ENCODE measurements at regions of chr2 and their contacts with region 1.

Region 1: DNA sequence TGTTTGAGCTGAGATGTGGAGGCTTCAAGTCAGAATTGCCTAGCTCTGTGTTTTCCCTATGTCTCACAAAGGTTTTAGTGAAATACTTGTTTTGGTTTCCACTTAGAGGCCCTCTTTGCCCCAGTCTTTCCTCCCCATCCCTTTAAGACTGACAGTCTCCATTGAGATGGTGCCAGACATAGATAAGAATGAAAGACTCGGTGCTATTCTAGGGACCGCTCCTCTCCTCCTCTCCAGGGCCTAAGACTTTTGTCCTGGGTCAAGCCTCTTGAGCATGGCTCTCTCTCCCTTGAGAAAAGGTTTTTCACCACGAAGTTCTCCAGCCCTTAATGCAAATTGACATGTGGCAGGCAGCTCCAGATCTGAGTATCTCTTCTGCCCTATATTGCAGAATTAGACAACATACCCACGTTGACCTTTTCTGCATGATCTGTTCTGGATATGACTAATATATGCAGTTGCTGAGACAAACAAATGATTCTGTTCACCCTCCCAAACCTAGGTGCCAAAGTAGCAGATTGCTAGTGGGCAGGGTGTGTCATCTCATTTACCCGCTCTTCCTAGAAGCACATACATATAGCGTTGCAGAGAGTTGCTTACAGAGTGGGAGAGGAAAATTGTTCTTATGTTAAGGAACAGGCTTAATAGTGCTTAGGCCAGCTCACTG is 47.5 kb upstream of the ACSL3 start:
- DNase-seq: peak; percentile 57
- H3K4me3 Mint-ChIP-seq: peak overlapping the region; percentile 20
- H3K27ac Mint-ChIP-seq: peak overlapping the region; percentile 90
- H3K4me1 Mint-ChIP-seq: peaks cover 19% of the 10 kb centered on the region
- H3K27me3 Mint-ChIP-seq: peaks cover 8% of the 10 kb centered on the region

Region 2: DNA sequence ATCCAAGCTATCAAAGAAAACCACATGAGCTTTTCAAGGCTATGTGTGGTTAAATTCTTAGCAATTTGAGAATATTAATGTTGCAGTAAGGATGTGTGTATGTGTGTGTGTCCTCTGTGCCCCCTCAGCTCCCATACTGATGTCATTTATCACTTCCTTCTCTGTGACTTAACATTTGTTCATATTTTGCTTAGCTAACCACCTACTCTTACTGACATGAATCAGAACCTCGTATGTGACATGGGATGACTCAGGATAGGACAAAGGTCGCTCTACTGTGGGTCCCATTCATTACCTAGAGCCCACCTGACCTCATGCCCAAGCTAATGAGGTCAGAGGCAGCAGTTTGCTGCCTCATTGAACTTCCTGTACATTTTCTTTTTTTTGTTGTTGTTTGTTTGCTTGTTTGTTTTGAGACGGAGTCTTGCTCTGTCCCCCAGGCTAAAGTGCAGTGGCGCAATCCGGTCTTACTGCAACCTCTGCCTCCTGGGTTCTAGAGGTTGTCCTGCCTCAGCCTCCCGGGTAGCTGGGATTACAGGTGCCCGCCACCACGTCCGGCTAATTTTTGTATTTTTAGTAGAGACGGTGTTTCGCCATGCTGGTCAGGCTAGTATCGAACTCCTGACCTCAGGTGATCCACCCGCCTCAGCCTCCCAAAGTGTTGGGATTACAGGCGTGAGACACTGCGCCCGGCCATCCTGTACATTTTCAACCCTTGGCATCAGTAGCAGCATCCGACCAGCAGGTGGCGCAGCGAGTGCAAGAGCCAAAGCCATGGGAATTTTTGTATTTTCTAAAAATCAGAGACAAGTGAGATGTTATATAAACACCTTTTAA is 105.4 kb before region 1 on chr2:
- CTCF ChIA-PET with region 1: interaction called, 5 read pairs
- POLR2A ChIA-PET with region 1: no interaction called
- intact Hi-C with region 1: loop called (anchors 1 kb)
- DNase-seq: peak; percentile 84
- H3K4me3 Mint-ChIP-seq: no peak overlapping the region
- H3K27ac Mint-ChIP-seq: no peak overlapping the region
- H3K4me1 Mint-ChIP-seq: peaks cover 6% of the 10 kb centered on the region
- H3K27me3 Mint-ChIP-seq: peaks cover 29% of the 10 kb centered on the region

Region 3: GRCh38 chr2:222797261-222797660 is 16.0 kb before region 1 on chr2:
- CTCF ChIA-PET with region 1: no interaction called
- POLR2A ChIA-PET with region 1: interaction called, 4 read pairs
- intact Hi-C with region 1: loop called (anchors 1 kb)
- DNase-seq: no peak
- H3K4me3 Mint-ChIP-seq: no peak overlapping the region
- H3K27ac Mint-ChIP-seq: no peak overlapping the region
- H3K4me1 Mint-ChIP-seq: peaks cover 2% of the 10 kb centered on the region
- H3K27me3 Mint-ChIP-seq: peaks cover 6% of the 10 kb centered on the region

Region 4: GRCh38 chr2:222860740-222861410 is 47.6 kb after region 1 on chr2 and contains the start of gene ACSL3:
- CTCF ChIA-PET with region 1: no interaction called
- POLR2A ChIA-PET with region 1: interaction called, 5 read pairs
- intact Hi-C with region 1: loop called (anchors 1 kb)
- DNase-seq: peak; percentile 95
- H3K4me3 Mint-ChIP-seq: peak within 1 kb of the TSS; percentile 71
- H3K27ac Mint-ChIP-seq: peak within 1 kb of the TSS; percentile 84
- H3K4me1 Mint-ChIP-seq: peaks cover 3% of the 10 kb centered on the region
- H3K27me3 Mint-ChIP-seq: peaks cover 5% of the 10 kb centered on the region
- total RNA-seq, gene ACSL3: 48.7 to 57.2 TPM

Region 5: DNA sequence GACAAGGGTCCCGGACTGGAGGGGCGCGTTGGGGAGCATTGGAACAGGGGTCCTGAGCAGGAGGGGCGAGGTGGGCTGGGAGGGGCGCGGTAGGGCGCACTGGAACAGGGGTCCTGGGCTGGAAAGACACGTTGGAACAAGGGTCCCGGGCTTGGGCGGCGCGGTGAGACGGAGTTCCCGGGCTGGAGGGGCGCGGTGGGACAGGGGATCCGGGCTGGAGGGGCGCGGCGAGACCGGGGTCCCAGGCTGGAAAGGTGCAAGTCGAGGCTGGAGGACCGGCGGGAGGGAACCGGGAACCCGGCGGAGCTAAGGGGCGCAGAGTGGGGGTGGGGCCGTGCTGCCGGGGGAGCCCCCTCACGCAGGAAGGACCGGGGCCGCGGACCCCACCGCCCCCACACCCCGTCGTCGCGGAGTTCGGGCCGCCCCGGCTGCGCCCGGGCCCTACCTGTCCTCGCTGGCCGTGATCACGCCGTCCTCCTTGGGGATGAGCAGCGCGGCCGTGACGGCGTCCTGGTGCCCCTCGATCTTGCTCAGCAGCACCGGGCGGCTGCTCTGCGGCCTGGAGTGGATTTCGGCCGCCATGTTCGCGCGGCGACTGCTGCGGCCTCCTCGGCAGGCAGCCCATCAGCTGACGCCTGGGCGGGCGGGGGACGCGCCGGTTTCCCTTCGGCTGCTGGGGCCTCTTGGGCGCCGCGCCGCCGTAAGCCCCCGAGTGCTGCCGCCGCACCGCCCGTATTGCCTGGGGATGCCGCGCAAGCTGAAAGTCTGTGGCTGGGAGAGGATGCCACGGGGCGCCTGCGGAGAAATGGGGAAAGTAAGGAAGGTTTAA is 1131.6 kb after region 1 on chr2 and contains the start of gene WDFY1:
- CTCF ChIA-PET with region 1: no interaction called
- POLR2A ChIA-PET with region 1: no interaction called
- intact Hi-C with region 1: loop called (anchors 5 kb)
- DNase-seq: peak; percentile 88
- H3K4me3 Mint-ChIP-seq: peak within 1 kb of the TSS; percentile 91
- H3K27ac Mint-ChIP-seq: peak within 1 kb of the TSS; percentile 91
- H3K4me1 Mint-ChIP-seq: peaks cover 54% of the 10 kb centered on the region
- H3K27me3 Mint-ChIP-seq: no peaks in the 10 kb centered on the region
- total RNA-seq, gene WDFY1: 48.7 to 50.1 TPM